ENCODE measurements at regions of chr12 and their contacts with region 1.

Region 1: GRCh38 chr12:4857472-4858291 is 52.0 kb upstream of the KCNA1 start:
- DNase-seq: peak; percentile 38 to 74 (median 57)
- H3K4me3 ChIP-seq: peak overlapping the region; percentile 13
- H3K27ac ChIP-seq: no peak overlapping the region
- H3K4me1 ChIP-seq: peaks cover 1% of the 10 kb centered on the region
- H3K27me3 ChIP-seq: no peaks in the 10 kb centered on the region
- CTCF ChIP-seq: peak in 1 of 3 donors; percentile 51
- EP300 ChIP-seq: no peak
- POLR2A ChIP-seq: no peak

Region 2: GRCh38 chr12:3299929-3300832 is 1557.5 kb before region 1 on chr12:
- intact Hi-C with region 1: no loop called
- DNase-seq: peak; percentile 81 to 89 (median 85)
- H3K4me3 ChIP-seq: no peak overlapping the region
- H3K27ac ChIP-seq: no peak overlapping the region
- H3K4me1 ChIP-seq: no peaks in the 10 kb centered on the region
- H3K27me3 ChIP-seq: no peaks in the 10 kb centered on the region
- CTCF ChIP-seq: peak; percentile 70 to 86 (median 85)
- EP300 ChIP-seq: no peak
- POLR2A ChIP-seq: no peak

Region 3: DNA sequence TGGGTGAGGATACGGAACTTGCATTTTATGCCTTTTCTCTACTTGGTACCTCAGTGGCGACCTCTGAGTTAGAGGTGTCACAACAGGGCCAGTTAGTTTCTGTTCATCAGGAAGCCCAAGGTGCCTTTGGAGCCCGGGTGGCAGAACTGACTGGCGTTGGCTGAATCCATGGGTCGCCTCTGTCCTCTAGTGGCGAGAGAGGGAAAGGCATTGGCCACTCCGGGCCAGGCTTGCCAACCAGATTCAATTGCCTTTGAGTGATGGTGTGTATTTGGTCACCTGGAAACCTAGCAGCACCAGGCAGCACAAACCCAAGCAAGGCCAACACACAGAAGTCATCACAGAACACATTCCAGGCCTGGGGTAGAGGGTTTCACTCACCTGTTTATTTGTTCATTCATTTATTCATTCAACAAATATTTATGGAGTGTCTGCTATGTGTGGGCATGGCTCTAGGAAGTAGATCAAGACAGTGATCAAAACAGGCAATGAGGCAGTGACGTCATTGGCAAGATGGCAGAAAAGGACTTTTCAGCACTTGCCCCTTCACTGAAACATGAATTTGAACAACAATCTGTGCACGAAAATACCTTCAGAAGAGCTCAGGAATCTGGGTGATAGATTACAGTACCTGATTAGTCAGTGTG is 145.5 kb after region 1 on chr12:
- intact Hi-C with region 1: loop called in 1 of 4 experiments (anchors 5 kb)
- DNase-seq: no peak
- H3K4me3 ChIP-seq: no peak overlapping the region
- H3K27ac ChIP-seq: no peak overlapping the region
- H3K4me1 ChIP-seq: no peaks in the 10 kb centered on the region
- H3K27me3 ChIP-seq: no peaks in the 10 kb centered on the region
- CTCF ChIP-seq: no peak
- EP300 ChIP-seq: no peak
- POLR2A ChIP-seq: no peak

Region 4: GRCh38 chr12:5073853-5074252 is 216.2 kb after region 1 on chr12:
- intact Hi-C with region 1: loop called in 1 of 4 experiments (anchors 10 kb)
- DNase-seq: no peak
- H3K4me3 ChIP-seq: no peak overlapping the region
- H3K27ac ChIP-seq: no peak overlapping the region
- H3K4me1 ChIP-seq: no peaks in the 10 kb centered on the region
- H3K27me3 ChIP-seq: no peaks in the 10 kb centered on the region
- CTCF ChIP-seq: no peak
- EP300 ChIP-seq: no peak
- POLR2A ChIP-seq: no peak

Region 5: GRCh38 chr12:6039894-6040568 is 1182.3 kb after region 1 on chr12:
- intact Hi-C with region 1: loop called in 2 of 4 experiments (anchors 10 kb)
- DNase-seq: peak; percentile 42 to 61 (median 54)
- H3K4me3 ChIP-seq: no peak overlapping the region
- H3K27ac ChIP-seq: no peak overlapping the region
- H3K4me1 ChIP-seq: no peaks in the 10 kb centered on the region
- H3K27me3 ChIP-seq: no peaks in the 10 kb centered on the region
- CTCF ChIP-seq: peak; percentile 74 to 88 (median 87)
- EP300 ChIP-seq: no peak
- POLR2A ChIP-seq: no peak